HEK293T (cell line): ENCODE measurements at regions of chr13 and their contacts with region 1.

Region 1: DNA sequence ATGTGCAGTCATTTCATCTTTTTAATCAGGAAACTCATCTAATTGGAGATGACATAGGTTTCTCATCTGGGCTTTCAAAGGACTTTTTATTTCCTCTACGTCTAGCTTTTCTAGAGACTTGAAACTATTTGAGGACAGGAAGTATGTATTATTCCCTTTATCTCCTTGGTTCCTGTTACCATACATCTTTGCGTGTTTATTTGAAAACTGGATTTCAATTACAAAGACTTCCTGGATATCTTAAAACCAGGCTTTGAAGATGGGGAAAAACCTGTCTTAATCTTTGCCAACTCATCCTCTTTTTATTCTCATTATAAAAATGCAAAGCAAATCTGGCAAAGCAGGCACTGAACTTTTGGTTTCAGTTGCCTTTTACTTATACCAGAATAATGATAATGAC is 130.5 kb downstream of the LMO7 start:
- DNase-seq: no peak

Region 2: GRCh38 chr13:75798353-75799255 is 32.0 kb after region 1 on chr13:
- CTCF ChIA-PET with region 1: interaction called, 11 read pairs
- POLR2A ChIA-PET with region 1: no interaction called
- DNase-seq: no peak